Panc1 (cell line): ENCODE measurements at regions of chr20 and their contacts with region 1.

Region 1: DNA sequence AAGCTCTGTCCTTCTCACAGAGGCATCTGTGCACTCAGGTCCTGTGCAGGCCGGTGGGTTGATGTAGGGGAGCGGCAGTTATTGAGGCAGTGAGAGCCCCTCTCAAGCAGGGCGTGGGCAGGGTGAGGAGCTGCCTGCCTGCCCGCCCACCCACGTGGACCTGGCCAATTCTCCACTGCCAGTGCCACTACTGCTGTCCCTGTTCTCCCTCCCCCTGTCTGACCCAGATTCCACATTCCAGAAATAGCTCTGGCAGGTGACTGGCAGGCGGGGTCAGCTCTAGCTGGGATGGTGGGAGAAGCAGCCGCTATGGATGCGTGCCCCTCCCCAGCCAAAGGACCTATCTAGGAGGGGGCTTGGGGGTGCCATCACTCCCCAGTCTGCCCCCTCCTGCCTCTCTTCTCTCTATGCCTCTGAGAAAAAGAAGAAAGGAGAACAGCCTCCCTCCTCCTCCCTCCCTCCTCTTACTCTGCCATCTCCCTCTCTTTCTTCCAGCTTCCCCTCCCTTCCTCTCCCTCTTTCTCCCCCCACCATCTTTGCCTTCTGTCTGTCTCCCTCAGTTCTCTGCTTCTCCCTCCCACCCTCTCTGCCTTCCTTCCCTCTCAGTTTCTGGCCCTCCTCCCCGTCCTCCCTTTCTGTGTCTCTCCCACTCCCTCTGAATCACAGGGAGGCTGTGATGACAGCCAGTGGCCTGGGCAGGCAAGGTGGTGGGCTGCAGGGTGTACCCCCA is 86.5 kb upstream of the MYL9 start:
- DNase-seq: no peak
- ATAC-seq: peak; percentile 66
- H3K4me3 ChIP-seq: no peak overlapping the region
- H3K27ac ChIP-seq: peak overlapping the region; percentile 27; the same call in 1 of the 2 replicates
- H3K4me1 ChIP-seq: peaks cover 4% of the 10 kb centered on the region; the same call in 1 of the 2 replicates
- H3K27me3 ChIP-seq: no peaks in the 10 kb centered on the region
- CTCF ChIP-seq: no peak

Region 2: GRCh38 chr20:35508493-35509218 is 946.2 kb before region 1 on chr20:
- CTCF ChIA-PET with region 1: no interaction called
- POLR2A ChIA-PET with region 1: interaction called, 11 read pairs
- in situ Hi-C with region 1: no loop called
- intact Hi-C with region 1: no loop called
- DNase-seq: no peak
- ATAC-seq: no peak
- H3K4me3 ChIP-seq: no peak overlapping the region
- H3K27ac ChIP-seq: no peak overlapping the region
- H3K4me1 ChIP-seq: no peaks in the 10 kb centered on the region
- H3K27me3 ChIP-seq: no peaks in the 10 kb centered on the region
- CTCF ChIP-seq: no peak

Region 3: DNA sequence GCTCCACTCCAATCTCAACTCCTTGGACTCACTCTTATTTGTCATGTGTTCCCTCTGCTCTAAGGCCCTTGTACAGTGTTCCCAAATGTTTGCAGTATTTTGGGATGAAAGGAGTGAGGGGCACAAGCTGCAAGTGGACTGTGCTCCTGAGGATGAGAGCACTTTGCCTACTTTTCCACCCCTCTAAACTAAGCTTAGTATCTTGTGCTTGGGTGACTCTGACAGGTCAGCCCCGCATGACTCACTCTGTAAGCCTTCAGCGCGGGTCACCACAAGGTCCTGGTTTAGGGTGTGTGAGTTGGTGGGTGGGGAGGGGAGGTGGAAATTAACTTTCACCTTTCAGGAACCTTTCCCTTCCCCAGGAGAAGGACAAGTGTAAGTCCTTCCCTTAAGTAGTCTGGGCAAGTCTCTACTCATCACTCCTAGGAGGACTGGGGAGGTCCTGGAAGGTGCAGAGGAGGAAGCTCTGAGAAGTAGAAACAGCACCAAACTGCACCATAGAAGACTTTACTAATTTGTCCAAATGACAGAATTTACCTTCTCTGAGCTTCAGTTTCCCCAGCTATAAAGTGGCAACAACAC is 369.1 kb before region 1 on chr20:
- CTCF ChIA-PET with region 1: no interaction called
- POLR2A ChIA-PET with region 1: interaction called, 11 read pairs
- in situ Hi-C with region 1: no loop called
- intact Hi-C with region 1: no loop called
- DNase-seq: peak; percentile 85
- ATAC-seq: peak; percentile 94
- H3K4me3 ChIP-seq: no peak overlapping the region
- H3K27ac ChIP-seq: peak overlapping the region; percentile 21; the same call in 1 of the 2 replicates
- H3K4me1 ChIP-seq: peaks cover 10% of the 10 kb centered on the region
- H3K27me3 ChIP-seq: no peaks in the 10 kb centered on the region
- CTCF ChIP-seq: no peak

Region 4: GRCh38 chr20:36217226-36217625 is 237.6 kb before region 1 on chr20:
- CTCF ChIA-PET with region 1: no interaction called
- POLR2A ChIA-PET with region 1: no interaction called
- in situ Hi-C with region 1: no loop called
- intact Hi-C with region 1: no loop called
- DNase-seq: no peak
- ATAC-seq: no peak
- H3K4me3 ChIP-seq: no peak overlapping the region
- H3K27ac ChIP-seq: no peak overlapping the region
- H3K4me1 ChIP-seq: no peaks in the 10 kb centered on the region
- H3K27me3 ChIP-seq: no peaks in the 10 kb centered on the region
- CTCF ChIP-seq: no peak